ENCODE measurements at regions of chr6 and their contacts with region 1.

Region 1: DNA sequence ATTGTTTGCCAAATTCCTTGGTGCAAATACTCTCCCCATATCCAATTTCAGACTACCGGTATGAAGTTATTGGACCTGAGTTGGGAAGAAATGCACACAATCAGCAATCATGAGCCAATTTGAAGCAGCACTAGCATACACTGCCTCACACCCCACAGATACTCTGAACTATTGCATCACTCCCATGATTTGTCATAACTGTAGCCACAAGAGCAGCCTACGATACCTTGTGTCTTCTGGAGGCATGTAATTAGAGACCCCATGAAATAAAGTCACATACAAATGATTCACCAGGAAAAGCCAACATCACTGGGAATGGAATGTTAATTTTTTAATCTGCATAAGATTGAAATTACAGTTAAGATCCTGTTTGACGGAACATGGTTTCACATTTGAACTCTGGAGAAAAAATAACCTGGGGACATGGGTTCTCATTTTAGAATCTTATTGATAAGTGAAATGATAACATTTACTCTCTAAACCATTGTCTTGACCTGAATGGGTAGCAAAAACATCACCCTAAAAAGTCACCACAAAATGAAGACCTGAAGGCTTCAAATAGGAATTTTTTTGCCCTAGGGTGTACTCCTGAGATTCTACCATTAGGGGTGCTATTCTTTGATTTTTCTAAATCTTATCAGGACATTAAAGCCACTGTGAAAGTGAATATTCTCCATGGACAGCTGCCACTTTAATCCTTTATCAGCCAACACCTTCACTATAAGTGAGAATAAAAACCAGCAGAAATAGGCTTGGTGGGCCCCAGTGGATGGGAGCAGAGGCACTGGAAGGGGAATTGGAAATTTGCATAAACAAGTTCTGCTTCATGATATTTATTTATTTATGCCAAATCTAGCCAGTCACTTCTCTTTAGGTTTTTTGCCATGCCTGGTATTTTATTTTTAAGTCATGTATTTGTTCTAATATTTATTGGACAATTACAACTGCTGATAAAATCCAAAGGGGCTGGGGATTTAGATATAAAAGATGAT is 34.5 kb upstream of the HBS1L start:
- DNase-seq: peak in 1 of 10 donors; percentile 21
- ATAC-seq: peak; percentile 25 to 34
- H3K4me3 Mint-ChIP-seq: peak overlapping the region; percentile 42 to 80 (median 51)
- H3K27ac Mint-ChIP-seq: peak overlapping the region; percentile 39 to 98 (median 94)
- H3K4me1 Mint-ChIP-seq: peaks cover 36 to 92% (median 81%) of the 10 kb centered on the region in 4 donors
- H3K27me3 Mint-ChIP-seq: no peaks in the 10 kb centered on the region

Region 2: DNA sequence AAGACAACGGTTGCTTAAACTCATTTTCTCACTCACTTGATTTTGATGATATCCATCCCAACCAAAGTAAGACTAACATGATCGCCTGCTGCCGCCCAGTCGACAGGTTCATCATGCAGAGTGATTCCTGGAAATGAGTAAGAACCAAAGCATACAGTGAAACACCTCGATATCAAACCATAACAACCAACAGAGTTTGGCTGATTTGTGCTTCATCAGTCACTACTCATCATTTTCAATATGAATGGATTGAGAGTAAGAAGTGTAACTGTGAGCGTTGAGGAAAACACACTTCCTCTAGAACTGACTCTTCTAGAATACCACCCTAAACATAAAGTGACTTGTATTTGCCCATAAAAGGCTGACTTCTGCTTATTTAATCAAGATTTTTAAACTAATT is 110.0 kb before region 1 on chr6:
- POLR2A ChIA-PET with region 1: no interaction called
- DNase-seq: no peak
- ATAC-seq: no peak
- H3K4me3 Mint-ChIP-seq: no peak overlapping the region
- H3K27ac Mint-ChIP-seq: peak overlapping the region in 1 of 10 donors; percentile 1
- H3K4me1 Mint-ChIP-seq: peaks cover 14 to 30% (median 19%) of the 10 kb centered on the region in 4 donors
- H3K27me3 Mint-ChIP-seq: no peaks in the 10 kb centered on the region

Region 3: GRCh38 chr6:135105710-135106109 is 16.6 kb after region 1 on chr6:
- POLR2A ChIA-PET with region 1: interaction called, 42 read pairs
- DNase-seq: no peak
- ATAC-seq: no peak
- H3K4me3 Mint-ChIP-seq: peak overlapping the region in 1 of 10 donors; percentile 47
- H3K27ac Mint-ChIP-seq: peak overlapping the region in 9 of 10 donors; percentile 50 to 95 (median 88)
- H3K4me1 Mint-ChIP-seq: peaks cover 32 to 76% (median 59%) of the 10 kb centered on the region in 4 donors
- H3K27me3 Mint-ChIP-seq: no peaks in the 10 kb centered on the region

Region 4: DNA sequence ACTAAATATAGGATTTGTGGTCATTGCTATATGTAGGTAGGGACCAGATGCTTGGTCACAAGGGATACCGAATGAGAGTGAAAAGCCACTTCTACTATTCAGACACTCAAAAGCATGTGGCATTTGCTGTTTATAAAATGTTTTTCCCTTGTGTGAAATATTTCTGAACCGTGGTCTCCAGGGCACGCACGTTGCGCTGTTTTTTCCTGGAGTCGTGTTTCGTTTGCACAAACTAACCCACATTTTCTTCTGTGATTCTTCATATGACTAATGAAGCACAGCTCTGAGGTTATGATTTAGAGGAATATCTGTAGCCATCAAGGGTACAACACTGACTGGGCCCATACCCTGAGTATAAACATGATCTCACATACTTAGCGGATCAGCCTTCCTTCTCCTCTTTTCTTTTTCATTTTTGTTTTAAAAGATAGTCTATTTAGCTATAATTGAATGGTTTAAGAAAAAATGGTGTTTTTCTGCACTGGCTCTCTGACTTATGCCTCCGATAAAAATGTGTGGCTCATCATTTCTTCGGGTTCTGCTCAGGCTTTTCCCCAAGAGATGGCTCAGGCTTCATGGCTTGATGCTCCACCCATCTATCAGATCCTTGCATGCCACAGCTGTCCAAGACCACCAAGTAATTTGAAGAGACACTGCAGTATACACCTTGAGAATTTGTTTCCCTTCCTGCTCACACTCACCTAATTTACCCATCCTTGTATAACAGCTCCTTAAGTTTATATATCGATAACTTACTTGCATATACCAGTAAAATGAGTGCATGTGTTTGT is 25.4 kb after region 1 on chr6:
- POLR2A ChIA-PET with region 1: interaction called, 17 read pairs
- DNase-seq: no peak
- ATAC-seq: no peak
- H3K4me3 Mint-ChIP-seq: peak overlapping the region in 3 of 10 donors; percentile 11 to 38 (median 12)
- H3K27ac Mint-ChIP-seq: peak overlapping the region in 8 of 10 donors; percentile 12 to 93 (median 78)
- H3K4me1 Mint-ChIP-seq: peaks cover 36 to 77% (median 66%) of the 10 kb centered on the region in 4 donors
- H3K27me3 Mint-ChIP-seq: no peaks in the 10 kb centered on the region

Region 5: GRCh38 chr6:135243871-135244796 is 155.0 kb after region 1 on chr6:
- POLR2A ChIA-PET with region 1: no interaction called
- DNase-seq: no peak
- ATAC-seq: no peak
- H3K4me3 Mint-ChIP-seq: no peak overlapping the region
- H3K27ac Mint-ChIP-seq: no peak overlapping the region
- H3K4me1 Mint-ChIP-seq: no peaks in the 10 kb centered on the region
- H3K27me3 Mint-ChIP-seq: no peaks in the 10 kb centered on the region

Region 6: DNA sequence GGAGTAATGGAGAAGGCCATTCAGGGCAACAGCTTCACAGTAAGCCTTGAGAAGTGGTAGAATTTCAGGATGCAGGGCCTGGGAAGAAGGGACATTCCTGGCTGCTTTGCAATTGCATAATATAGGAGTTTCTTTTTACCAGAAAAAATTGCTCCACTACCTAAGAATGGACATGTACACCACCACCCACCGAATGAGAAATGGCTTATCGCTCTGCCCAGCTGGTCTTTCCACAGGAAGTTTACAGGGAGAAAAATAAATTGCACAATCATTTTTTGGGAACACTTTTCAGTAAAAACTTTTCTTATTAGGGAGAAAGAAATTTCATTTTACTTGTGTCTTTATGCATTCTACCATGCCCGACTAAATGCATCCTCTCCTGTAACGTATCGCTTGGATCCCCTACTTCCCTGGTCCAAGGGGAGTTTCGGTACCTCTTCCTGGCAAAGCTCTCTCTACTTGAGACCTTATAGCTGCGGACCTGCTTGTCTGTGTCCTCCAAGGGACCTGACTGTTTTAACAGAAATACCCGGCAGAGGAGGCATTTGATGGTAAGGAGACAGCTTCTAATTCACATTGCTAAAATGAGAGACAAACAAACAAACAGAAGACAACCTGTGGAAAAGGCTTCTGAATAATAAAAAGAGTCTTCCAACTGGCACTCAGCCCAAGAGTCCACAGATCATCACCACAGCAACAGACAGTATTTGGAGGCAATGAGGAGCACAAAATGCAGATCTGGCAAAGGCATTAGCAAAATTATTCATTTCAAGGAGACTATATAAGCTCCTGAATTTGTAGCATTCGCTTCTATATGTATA is 1649.0 kb after region 1 on chr6:
- POLR2A ChIA-PET with region 1: no interaction called
- DNase-seq: no peak
- ATAC-seq: no peak
- H3K4me3 Mint-ChIP-seq: no peak overlapping the region
- H3K27ac Mint-ChIP-seq: peak overlapping the region in 3 of 10 donors; percentile 8 to 60 (median 36)
- H3K4me1 Mint-ChIP-seq: peaks cover 10 to 51% (median 18%) of the 10 kb centered on the region in 4 donors
- H3K27me3 Mint-ChIP-seq: no peaks in the 10 kb centered on the region

Measured in naive thymus-derived CD8-positive, alpha-beta T cell (primary cell).